ENCODE measurements at regions of chr1 and their contacts with region 1.

Region 1: DNA sequence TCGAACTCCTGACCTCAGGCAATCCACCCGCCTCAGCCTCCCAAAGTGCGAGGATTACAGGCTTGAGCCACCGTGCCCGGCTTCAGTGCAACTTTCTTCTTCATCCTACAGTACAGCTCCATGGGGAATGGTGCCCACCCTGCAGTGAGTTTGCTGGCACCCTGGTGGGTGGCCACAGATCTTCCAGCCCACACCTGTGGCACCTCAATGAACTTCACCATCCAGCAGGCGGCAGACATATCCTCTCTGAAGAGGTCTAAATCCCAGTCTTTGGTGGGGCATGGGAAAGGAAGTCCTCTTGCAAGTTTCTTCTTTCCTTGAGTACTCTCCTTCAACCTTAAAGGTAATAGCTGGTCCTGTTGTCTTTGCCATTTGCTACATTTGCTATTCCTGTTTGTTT is 18.1 kb upstream of the ZBTB8A start:
- DNase-seq: no peak
- H3K4me3 ChIP-seq: peak overlapping the region; percentile 41
- H3K27ac ChIP-seq: no peak overlapping the region
- H3K4me1 ChIP-seq: no peaks in the 10 kb centered on the region
- H3K27me3 ChIP-seq: no peaks in the 10 kb centered on the region
- CTCF ChIP-seq: no peak

Region 2: GRCh38 chr1:32377541-32378220 is 143.5 kb before region 1 on chr1:
- CTCF ChIA-PET with region 1: no interaction called
- POLR2A ChIA-PET with region 1: no interaction called
- intact Hi-C with region 1: no loop called
- DNase-seq: no peak
- H3K4me3 ChIP-seq: no peak overlapping the region
- H3K27ac ChIP-seq: no peak overlapping the region
- H3K4me1 ChIP-seq: no peaks in the 10 kb centered on the region
- H3K27me3 ChIP-seq: no peaks in the 10 kb centered on the region
- CTCF ChIP-seq: no peak

Region 3: DNA sequence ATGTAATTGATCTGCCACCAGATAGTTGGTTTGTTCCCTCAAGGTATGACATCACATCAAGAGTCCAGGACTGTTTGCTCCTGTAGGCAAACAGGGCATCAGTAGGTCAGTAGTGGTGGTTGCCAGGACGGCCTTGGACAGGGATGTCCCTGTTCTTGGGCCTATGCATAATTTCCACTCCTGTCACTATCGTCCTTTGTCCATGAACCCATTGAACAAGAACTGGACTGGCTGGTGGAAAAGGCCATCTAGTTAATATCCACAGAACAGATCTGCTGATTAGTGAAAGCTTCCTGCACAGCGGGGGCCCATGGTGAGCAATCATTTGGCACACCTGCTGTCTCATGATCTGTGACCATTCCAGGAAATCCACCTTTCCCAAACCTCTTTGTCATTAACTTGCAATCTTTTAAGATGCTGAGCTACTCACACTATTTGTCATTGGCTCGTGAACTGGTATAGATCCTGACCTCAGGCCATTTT is 114.5 kb before region 1 on chr1:
- CTCF ChIA-PET with region 1: no interaction called
- POLR2A ChIA-PET with region 1: no interaction called
- intact Hi-C with region 1: no loop called
- DNase-seq: no peak
- H3K4me3 ChIP-seq: no peak overlapping the region
- H3K27ac ChIP-seq: no peak overlapping the region
- H3K4me1 ChIP-seq: no peaks in the 10 kb centered on the region
- H3K27me3 ChIP-seq: no peaks in the 10 kb centered on the region
- CTCF ChIP-seq: no peak

Region 4: DNA sequence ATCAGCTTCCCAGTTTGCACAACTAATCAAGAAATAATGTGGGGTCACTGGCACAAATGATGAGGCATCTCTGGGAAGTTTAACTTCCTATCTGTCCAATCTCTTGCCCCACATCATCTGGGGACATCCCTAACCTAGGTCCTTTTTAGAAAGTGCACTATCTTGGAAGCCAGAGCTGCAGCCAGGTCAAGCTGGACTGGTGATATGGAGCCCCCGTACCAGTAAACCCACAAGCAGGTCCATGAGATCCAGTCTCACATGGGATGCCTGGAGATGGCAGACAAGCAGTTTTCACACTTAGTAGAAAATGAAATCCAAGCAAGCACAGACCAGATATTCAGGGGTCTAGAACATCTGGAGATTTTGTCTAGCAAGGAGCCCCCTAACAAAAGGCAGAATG is 99.4 kb before region 1 on chr1:
- CTCF ChIA-PET with region 1: interaction called, 10 read pairs
- POLR2A ChIA-PET with region 1: no interaction called
- intact Hi-C with region 1: no loop called
- DNase-seq: no peak
- H3K4me3 ChIP-seq: no peak overlapping the region
- H3K27ac ChIP-seq: no peak overlapping the region
- H3K4me1 ChIP-seq: peaks cover 4% of the 10 kb centered on the region
- H3K27me3 ChIP-seq: no peaks in the 10 kb centered on the region
- CTCF ChIP-seq: no peak

Region 5: GRCh38 chr1:32606565-32607371 is 85.6 kb after region 1 on chr1:
- CTCF ChIA-PET with region 1: interaction called, 10 read pairs
- POLR2A ChIA-PET with region 1: no interaction called
- intact Hi-C with region 1: no loop called
- DNase-seq: no peak
- H3K4me3 ChIP-seq: no peak overlapping the region
- H3K27ac ChIP-seq: no peak overlapping the region
- H3K4me1 ChIP-seq: no peaks in the 10 kb centered on the region
- H3K27me3 ChIP-seq: no peaks in the 10 kb centered on the region
- CTCF ChIP-seq: no peak

Region 6: DNA sequence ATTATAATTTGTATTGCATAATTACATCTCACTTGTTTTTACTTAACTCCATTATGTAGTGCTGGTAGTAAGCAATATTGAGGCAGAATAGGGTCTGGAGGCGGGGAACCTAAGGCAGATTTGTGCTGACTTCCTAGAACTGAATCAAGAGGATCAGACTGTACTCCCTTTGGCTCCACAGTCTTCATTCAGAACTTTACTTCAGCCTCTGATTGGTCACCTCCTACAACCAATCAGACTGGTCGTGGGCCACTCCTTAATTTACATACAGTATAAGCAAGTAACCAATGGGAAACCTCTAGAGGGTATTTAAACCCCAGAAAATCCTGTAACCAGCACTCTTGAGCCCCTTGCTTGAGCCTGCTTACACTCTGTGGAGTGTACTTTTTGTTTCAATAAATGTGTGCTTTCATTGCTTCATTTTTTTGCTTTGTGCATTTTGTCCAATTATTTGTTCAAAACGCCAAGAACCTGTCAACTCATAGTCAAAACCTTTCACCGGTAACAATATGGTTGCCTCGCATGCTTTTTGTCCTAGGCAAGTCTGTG is 97.6 kb after region 1 on chr1:
- CTCF ChIA-PET with region 1: interaction called, 10 read pairs
- POLR2A ChIA-PET with region 1: no interaction called
- intact Hi-C with region 1: loop called (anchors 1 kb)
- DNase-seq: peak; percentile 43
- H3K4me3 ChIP-seq: no peak overlapping the region
- H3K27ac ChIP-seq: no peak overlapping the region
- H3K4me1 ChIP-seq: no peaks in the 10 kb centered on the region
- H3K27me3 ChIP-seq: no peaks in the 10 kb centered on the region
- CTCF ChIP-seq: no peak

Region 7: DNA sequence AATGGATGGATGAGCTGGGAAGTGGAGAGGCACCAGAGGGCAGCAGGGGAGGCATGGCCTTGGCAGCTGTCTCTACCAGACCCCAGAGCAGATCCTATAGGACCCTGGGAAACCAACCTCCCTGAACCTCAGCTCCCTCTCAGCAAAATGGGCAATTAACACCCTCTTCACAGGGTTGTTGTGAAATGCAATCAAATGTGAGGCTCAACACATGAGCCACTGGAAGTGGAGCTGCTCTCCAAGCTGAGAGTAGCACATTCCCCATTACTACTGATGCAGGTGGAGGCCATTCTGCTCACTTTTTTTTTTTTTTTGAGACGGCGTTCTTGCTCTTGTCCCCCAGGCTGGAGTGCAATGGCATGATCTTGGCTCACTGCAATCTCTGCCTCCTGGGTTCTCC is 187.9 kb after region 1 on chr1:
- CTCF ChIA-PET with region 1: interaction called, 10 read pairs
- POLR2A ChIA-PET with region 1: no interaction called
- intact Hi-C with region 1: no loop called
- DNase-seq: no peak
- H3K4me3 ChIP-seq: no peak overlapping the region
- H3K27ac ChIP-seq: no peak overlapping the region
- H3K4me1 ChIP-seq: no peaks in the 10 kb centered on the region
- H3K27me3 ChIP-seq: no peaks in the 10 kb centered on the region
- CTCF ChIP-seq: no peak

Region 8: GRCh38 chr1:32870615-32871363 is 349.6 kb after region 1 on chr1 and contains the start of gene FNDC5:
- CTCF ChIA-PET with region 1: interaction called, 11 read pairs
- POLR2A ChIA-PET with region 1: no interaction called
- intact Hi-C with region 1: loop called (anchors 10 kb)
- DNase-seq: peak; percentile 42
- H3K4me3 ChIP-seq: peak within 1 kb of the TSS; percentile 48
- H3K27ac ChIP-seq: no peak within 1 kb of the TSS
- H3K4me1 ChIP-seq: peaks cover 5% of the 10 kb centered on the region
- H3K27me3 ChIP-seq: no peaks in the 10 kb centered on the region
- CTCF ChIP-seq: no peak
- total RNA-seq, gene FNDC5: 1.2 and 1.3 TPM in 2 replicates

Region 9: GRCh38 chr1:33322870-33323585 is 801.9 kb after region 1 on chr1:
- CTCF ChIA-PET with region 1: interaction called, 10 read pairs
- POLR2A ChIA-PET with region 1: no interaction called
- intact Hi-C with region 1: no loop called
- DNase-seq: no peak
- H3K4me3 ChIP-seq: no peak overlapping the region
- H3K27ac ChIP-seq: no peak overlapping the region
- H3K4me1 ChIP-seq: no peaks in the 10 kb centered on the region
- H3K27me3 ChIP-seq: no peaks in the 10 kb centered on the region
- CTCF ChIP-seq: no peak

Measured in A673 (cell line).